ENCODE measurements at regions of chr2 and their contacts with region 1.

Region 1: DNA sequence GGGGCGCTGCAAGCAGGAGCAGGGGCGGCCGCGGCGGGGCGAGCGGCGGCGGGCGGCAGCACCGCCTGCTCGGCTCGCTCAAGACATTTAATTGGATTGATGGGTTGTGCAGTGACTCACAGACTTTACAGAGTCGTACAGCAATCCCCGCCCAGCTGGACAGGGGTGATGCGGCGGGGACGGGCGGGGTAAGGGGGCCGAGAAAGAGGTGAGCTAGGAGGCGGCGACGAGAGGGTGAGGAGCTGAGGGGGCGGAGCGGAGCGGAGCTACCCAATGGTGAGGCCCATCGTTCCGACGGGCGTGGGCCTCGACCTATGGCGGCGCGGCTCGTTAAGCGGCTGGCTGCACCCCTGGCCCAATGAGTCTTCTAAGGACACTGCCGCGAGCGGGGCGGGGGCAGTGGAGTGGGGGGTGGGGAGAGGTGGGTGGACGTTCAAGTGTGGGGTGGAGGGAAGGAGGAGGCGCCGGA is 97.1 kb upstream of the SERTAD2 start:
- DNase-seq: peak; percentile 100
- ATAC-seq: peak; percentile 88 to 92 (median 88)
- H3K4me3 ChIP-seq: peak overlapping the region; percentile 70
- H3K27ac ChIP-seq: peak overlapping the region; percentile 92
- H3K4me1 ChIP-seq: peaks cover 11% of the 10 kb centered on the region
- H3K27me3 ChIP-seq: no peaks in the 10 kb centered on the region
- CTCF ChIP-seq: no peak

Region 2: GRCh38 chr2:64698668-64699444 is 52.0 kb before region 1 on chr2:
- intact Hi-C with region 1: no loop called
- DNase-seq: no peak
- ATAC-seq: no peak
- H3K4me3 ChIP-seq: no peak overlapping the region
- H3K27ac ChIP-seq: no peak overlapping the region
- H3K4me1 ChIP-seq: no peaks in the 10 kb centered on the region
- H3K27me3 ChIP-seq: no peaks in the 10 kb centered on the region
- CTCF ChIP-seq: no peak

Region 3: DNA sequence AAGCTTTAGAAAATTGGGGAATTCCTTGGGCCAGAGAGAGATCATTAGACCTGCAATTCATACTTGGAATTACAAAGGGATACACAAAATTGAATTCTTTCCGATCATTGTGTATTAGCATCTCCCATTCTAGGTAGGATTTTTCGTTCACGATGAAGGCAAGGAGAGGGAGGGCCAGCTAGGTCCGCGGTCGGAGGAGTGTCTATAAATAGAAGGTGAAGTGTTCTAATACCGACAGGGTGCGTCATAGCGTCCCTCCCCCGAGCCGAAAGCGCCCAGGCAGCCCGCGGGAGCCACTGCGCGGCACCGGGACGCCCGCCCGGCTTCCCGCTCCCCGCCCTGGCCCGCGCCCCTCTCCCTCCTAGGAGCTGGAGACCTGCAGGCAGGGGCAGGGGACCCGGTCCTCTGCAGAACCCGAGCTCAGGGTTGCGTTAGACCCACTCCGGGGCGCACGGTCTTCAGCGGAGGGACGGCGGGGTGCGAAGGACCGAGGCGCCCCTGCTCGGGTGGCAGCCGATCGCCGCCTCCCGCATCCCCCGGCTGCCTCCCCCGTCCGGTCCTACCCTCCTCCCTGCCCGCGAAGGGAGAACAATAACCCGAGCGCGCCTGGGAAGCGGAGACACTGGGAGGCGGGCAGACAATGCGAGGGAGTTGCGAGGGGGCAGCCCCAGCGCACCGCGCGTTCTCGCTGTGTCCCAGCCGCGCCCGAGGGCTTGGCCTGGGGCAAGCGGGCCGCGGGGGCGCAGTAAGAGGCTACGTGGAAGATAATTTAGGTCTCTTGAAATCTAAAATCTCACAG is 17.0 kb after region 1 on chr2:
- intact Hi-C with region 1: loop called in 1 of 2 experiments (anchors 1 kb)
- DNase-seq: peak; percentile 88 to 92
- ATAC-seq: peak; percentile 98
- H3K4me3 ChIP-seq: peak overlapping the region; percentile 80
- H3K27ac ChIP-seq: peak overlapping the region; percentile 98
- H3K4me1 ChIP-seq: peaks cover 3% of the 10 kb centered on the region
- H3K27me3 ChIP-seq: no peaks in the 10 kb centered on the region
- CTCF ChIP-seq: no peak

Region 4: DNA sequence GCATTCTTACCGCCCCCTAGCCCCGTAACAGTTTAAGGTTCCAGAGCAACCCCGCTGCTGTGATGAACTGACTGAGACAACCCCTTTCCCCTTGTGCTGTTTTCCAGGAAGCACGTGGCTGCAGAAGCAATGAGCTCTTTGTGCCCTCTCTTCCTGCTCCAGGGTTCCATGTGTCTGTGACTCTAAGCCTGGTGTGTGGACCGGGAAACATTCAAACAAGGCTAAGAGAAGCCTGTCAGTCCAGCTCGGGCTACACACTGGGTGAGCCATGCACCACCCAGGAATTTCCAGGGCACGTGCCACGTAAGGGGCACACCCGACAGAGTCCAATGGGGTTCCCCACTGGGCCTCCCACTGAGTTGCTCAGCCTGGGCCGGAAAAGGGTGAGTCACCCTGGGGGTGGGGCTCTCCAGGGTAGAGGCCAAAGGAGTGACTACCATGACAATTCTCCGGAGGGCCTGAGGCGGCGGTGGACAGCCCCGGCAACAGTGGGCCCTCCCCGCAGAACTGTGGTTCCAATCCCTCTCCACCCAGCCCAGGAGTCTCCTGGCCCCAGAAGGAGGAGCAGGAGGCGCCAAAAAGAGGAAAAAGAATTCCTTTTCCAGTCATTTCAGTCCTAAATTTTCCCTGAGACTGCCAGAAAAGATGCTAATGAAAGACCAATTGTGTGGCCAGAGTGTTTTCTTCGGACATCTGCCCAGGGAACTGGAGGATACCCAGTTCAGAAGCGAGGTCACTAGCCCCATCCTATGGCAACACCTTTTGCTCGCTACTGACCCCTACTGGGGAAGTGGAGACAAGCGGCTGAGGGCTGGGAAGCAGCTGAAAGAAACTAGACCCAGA is 80.5 kb after region 1 on chr2:
- intact Hi-C with region 1: loop called in 1 of 2 experiments (anchors 2 kb)
- DNase-seq: peak; percentile 91 to 93
- ATAC-seq: peak; percentile 85 to 93 (median 90)
- H3K4me3 ChIP-seq: no peak overlapping the region
- H3K27ac ChIP-seq: peak overlapping the region; percentile 53
- H3K4me1 ChIP-seq: peaks cover 8% of the 10 kb centered on the region
- H3K27me3 ChIP-seq: no peaks in the 10 kb centered on the region
- CTCF ChIP-seq: peak; percentile 78

Region 5: GRCh38 chr2:64859312-64860212 is 108.7 kb after region 1 on chr2:
- intact Hi-C with region 1: loop called in 1 of 2 experiments (anchors 2 kb)
- DNase-seq: peak; percentile 92 to 95
- ATAC-seq: peak; percentile 84 to 89 (median 88)
- H3K4me3 ChIP-seq: peak overlapping the region; percentile 65
- H3K27ac ChIP-seq: peak overlapping the region; percentile 93
- H3K4me1 ChIP-seq: peaks cover 45% of the 10 kb centered on the region
- H3K27me3 ChIP-seq: no peaks in the 10 kb centered on the region
- CTCF ChIP-seq: peak; percentile 15